HEK293 (cell line): ENCODE measurements at regions of chr1 and their contacts with region 1.

Region 1: DNA sequence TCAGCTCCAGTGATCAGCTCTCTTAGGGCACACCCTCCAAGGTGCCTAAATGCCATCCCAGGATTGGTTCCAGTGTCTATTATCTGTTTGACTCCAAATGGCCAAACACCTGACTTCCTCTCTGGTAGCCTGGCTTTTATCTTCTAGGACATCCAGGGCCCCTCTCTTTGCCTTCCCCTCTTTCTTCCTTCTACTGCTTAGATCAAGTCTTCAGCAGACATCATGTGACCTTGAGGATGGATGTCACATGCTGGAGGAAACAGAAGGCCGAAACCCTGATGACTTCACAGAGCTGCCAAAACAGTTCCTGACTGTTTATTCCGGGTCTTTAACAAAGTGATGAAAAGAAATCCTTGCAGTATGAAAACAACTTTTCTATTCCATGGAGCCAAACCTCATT is 24.4 kb upstream of the WDR26 start:
- H3K4me3 ChIP-seq: no peak overlapping the region
- H3K27ac ChIP-seq: no peak overlapping the region
- H3K4me1 ChIP-seq: no peaks in the 10 kb centered on the region; the same call in 1 of the 2 replicates
- CTCF ChIP-seq: no peak

Region 2: GRCh38 chr1:224402472-224403035 is 56.4 kb before region 1 on chr1:
- CTCF ChIA-PET with region 1: interaction called, 13 read pairs
- POLR2A ChIA-PET with region 1: no interaction called
- H3K4me3 ChIP-seq: no peak overlapping the region
- H3K27ac ChIP-seq: no peak overlapping the region
- H3K4me1 ChIP-seq: no peaks in the 10 kb centered on the region; the same call in 1 of the 2 replicates
- CTCF ChIP-seq: no peak

Region 3: GRCh38 chr1:224435318-224435763 is 23.7 kb before region 1 on chr1:
- CTCF ChIA-PET with region 1: interaction called, 22 read pairs
- POLR2A ChIA-PET with region 1: interaction called, 9 read pairs
- H3K4me3 ChIP-seq: peak overlapping the region; percentile 96
- H3K27ac ChIP-seq: peak overlapping the region; percentile 76; the same call in 1 of the 2 replicates
- H3K4me1 ChIP-seq: peaks cover 26% of the 10 kb centered on the region
- CTCF ChIP-seq: no peak

Region 4: DNA sequence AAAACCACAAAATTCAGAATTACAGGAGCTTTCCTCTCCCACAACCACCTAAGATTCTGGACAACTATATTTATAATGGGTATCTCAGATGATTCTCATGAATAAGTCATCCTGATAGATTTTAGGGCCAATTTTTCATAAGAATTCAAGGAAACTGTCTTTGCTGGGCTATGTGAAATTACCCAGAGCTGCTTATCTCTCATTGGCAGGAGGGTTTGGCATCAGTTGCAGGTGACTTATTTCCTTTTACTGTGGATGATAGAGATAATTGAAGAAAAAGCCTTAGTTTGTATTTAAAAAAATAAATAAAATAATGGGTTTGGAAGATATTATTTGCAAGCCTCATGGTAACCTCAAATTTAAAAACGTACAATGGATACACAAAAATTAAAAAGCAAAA is 13.8 kb after region 1 on chr1:
- CTCF ChIA-PET with region 1: interaction called, 15 read pairs
- POLR2A ChIA-PET with region 1: no interaction called
- H3K4me3 ChIP-seq: no peak overlapping the region
- H3K27ac ChIP-seq: no peak overlapping the region
- H3K4me1 ChIP-seq: no peaks in the 10 kb centered on the region
- CTCF ChIP-seq: no peak